ENCODE measurements at regions of chr4 and their contacts with region 1.

Region 1: GRCh38 chr4:77240469-77241066 is 83.6 kb downstream of the CCNG2 start:
- DNase-seq: peak; percentile 74
- ATAC-seq: peak; percentile 78
- H3K4me3 ChIP-seq: no peak overlapping the region
- H3K27ac ChIP-seq: no peak overlapping the region
- H3K4me1 ChIP-seq: no peaks in the 10 kb centered on the region
- H3K27me3 ChIP-seq: no peaks in the 10 kb centered on the region
- CTCF ChIP-seq: peak; percentile 85

Region 2: DNA sequence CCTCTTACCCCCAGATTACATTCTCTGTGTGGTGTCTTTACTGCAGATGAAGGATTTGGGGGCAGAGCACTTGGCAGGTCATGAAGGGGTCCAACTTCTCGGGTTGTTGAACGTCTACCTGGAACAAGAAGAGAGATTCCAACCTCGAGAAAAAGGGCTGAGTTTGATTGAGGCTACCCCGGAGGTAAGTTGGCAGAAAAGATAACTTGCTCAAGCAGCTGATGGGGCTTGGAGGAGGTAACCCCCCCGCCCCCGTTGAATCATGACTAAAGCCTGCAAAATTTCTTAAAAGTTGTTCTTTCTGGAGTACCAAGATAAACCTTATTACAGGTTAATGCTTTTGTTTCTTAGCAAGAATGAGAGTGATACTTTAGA is 82.1 kb before region 1 on chr4:
- CTCF ChIA-PET with region 1: no interaction called
- POLR2A ChIA-PET with region 1: no interaction called
- intact Hi-C with region 1: no loop called
- DNase-seq: peak; percentile 21
- ATAC-seq: no peak
- H3K4me3 ChIP-seq: peak overlapping the region; percentile 78
- H3K27ac ChIP-seq: peak overlapping the region; percentile 45
- H3K4me1 ChIP-seq: peaks cover 12% of the 10 kb centered on the region
- H3K27me3 ChIP-seq: no peaks in the 10 kb centered on the region
- CTCF ChIP-seq: no peak

Region 3: GRCh38 chr4:77308843-77309242 is 68.3 kb after region 1 on chr4:
- CTCF ChIA-PET with region 1: no interaction called
- POLR2A ChIA-PET with region 1: no interaction called
- intact Hi-C with region 1: loop called (anchors 1 kb)
- DNase-seq: peak; percentile 67
- ATAC-seq: peak; percentile 83
- H3K4me3 ChIP-seq: no peak overlapping the region
- H3K27ac ChIP-seq: no peak overlapping the region
- H3K4me1 ChIP-seq: peaks cover 5% of the 10 kb centered on the region; the same call in 1 of the 2 replicates
- H3K27me3 ChIP-seq: peaks cover 6% of the 10 kb centered on the region; the same call in 1 of the 2 replicates
- CTCF ChIP-seq: peak; percentile 64

Region 4: DNA sequence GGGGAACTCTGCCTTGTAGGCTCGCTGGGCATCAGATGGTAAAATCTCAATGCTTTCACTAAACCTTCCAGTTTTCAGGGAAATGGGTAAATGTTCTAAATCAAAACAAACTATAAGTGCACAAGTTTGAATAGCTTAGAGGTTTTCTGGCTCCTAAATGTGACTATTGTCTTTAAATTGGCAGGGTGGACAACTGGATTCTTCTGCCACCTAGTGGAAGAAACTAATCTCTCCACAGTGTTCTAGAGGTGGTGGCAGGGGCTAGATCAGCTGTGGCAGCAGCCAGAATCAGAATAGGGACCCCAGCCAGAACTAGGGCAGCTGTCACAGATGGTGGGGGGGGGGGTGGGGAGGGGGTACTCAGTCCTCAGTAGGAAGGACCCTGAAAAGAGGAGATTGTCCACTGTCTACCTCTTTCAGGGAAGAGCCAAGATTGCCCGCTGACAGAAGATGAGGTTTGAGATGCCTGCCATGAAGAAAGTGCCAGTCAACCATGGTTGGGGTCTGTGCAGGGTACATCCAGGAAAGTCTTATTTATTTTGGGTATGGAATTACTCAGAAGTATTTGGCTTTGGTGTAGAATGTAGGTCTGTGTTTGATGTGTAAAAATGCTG is 117.9 kb after region 1 on chr4:
- CTCF ChIA-PET with region 1: interaction called, 5 read pairs
- POLR2A ChIA-PET with region 1: no interaction called
- intact Hi-C with region 1: loop called (anchors 1 kb)
- DNase-seq: peak; percentile 55
- ATAC-seq: peak; percentile 67
- H3K4me3 ChIP-seq: no peak overlapping the region
- H3K27ac ChIP-seq: no peak overlapping the region
- H3K4me1 ChIP-seq: no peaks in the 10 kb centered on the region
- H3K27me3 ChIP-seq: 0 out of 2 replicates have a peak, but pooled peaks cover 14% of the 10 kb centered on the region
- CTCF ChIP-seq: peak; percentile 63

Measured in PC-3 (cell line).